ENCODE measurements at regions of chr20 and their contacts with region 1.

Region 1: DNA sequence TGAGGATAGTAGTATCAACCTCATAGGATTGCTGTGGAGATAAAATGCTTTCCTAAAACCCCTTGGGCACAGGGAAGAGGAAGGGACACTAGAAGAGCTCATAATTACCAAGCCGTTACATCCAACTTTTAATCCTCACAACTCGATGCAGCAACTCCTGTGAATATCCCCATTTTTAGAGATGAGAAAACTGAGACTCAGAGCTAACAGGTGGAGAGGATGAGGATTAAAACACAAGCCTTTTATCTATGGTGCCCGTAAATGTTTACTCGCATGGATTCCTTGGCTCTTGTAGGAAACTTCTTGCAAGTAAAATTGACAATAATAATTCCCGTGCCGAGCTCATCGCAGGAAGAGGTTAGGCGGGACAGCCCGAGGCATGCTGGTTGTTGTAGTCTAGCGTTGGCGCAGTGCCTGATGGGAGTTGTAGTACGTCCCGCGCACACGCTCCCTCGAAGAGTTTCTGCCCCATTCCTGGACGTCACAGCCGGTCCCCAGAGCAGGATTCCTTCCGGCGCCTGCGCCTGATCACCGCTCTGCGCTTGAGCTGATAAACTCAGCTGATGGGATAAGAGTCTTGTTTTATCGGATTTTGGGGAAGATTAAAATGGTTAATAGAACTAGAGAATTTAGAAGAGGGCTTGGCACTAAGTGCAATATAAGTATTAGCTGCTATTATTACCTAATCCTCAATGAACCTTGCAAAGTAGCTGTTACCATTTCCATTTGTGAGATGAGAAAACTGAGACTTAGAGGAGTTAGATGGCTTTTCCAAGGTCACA is 2.8 kb upstream of the UBE2V1 start:
- DNase-seq: peak; percentile 86
- H3K4me3 Mint-ChIP-seq: peak overlapping the region; percentile 100
- H3K27ac Mint-ChIP-seq: peak overlapping the region; percentile 88
- H3K4me1 Mint-ChIP-seq: peaks cover 45% of the 10 kb centered on the region
- H3K27me3 Mint-ChIP-seq: no peaks in the 10 kb centered on the region

Region 2: GRCh38 chr20:49186535-49187329 is 929.0 kb before region 1 on chr20:
- intact Hi-C with region 1: loop called (anchors 5 kb)
- DNase-seq: peak; percentile 66
- H3K4me3 Mint-ChIP-seq: peak overlapping the region; percentile 89
- H3K27ac Mint-ChIP-seq: peak overlapping the region; percentile 81
- H3K4me1 Mint-ChIP-seq: peaks cover 50% of the 10 kb centered on the region
- H3K27me3 Mint-ChIP-seq: peaks cover 4% of the 10 kb centered on the region

Region 3: DNA sequence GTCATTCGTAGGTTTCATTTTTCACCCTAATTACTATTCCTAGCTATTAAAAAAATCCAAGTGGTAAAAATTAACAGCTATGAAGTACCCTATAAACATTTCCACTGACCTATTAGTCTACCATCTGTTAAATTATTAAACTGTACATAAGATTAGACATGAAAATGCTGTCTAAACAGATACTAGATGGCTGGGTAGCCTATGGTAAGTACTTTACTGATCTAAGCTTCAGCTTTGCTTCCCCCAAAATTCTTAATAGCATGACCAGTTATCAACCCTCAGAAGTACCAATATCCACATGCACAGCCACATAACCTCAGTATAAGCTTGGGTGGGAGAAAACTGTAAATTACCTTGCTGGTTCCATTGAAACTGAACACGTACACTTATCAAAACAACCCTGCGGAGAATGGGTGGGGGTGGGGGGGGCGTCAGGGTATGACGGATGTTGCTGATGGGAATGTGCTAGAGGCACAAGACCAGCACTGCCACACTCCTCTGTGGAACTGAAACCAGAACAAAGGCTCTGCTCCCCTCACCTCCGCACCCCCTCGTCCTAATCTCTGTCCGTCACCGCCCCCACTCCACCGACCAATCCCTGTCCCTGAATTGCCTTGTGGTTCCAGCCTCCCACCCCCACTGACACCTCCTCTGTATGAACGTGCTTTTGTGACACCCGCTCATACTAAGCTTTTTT is 447.5 kb before region 1 on chr20:
- intact Hi-C with region 1: loop called (anchors 10 kb)
- DNase-seq: no peak
- H3K4me3 Mint-ChIP-seq: peak overlapping the region; percentile 5
- H3K27ac Mint-ChIP-seq: no peak overlapping the region
- H3K4me1 Mint-ChIP-seq: peaks cover 62% of the 10 kb centered on the region
- H3K27me3 Mint-ChIP-seq: peaks cover 3% of the 10 kb centered on the region

Region 4: DNA sequence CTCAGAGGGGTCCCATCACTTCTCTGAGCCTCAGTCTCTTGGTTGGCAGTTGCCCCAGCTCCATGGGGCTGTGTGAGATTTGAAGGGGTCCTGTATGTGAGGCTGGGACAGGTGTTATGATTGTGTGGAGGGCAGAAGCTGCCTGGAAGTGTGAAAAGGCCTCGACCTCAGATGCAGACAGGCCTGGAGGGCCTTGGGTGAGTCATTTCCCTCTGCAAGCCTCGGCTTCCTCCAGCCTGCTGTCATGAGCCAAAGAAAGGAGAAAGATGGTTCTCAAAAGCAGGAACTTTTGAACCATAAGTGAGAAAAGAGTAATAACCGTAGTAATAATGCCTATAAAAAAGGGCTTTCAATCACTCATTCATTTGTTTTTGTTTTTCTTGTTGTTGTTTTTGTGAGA is 95.5 kb before region 1 on chr20:
- intact Hi-C with region 1: no loop called
- DNase-seq: no peak
- H3K4me3 Mint-ChIP-seq: no peak overlapping the region
- H3K27ac Mint-ChIP-seq: no peak overlapping the region
- H3K4me1 Mint-ChIP-seq: peaks cover 17% of the 10 kb centered on the region
- H3K27me3 Mint-ChIP-seq: peaks cover 2% of the 10 kb centered on the region

Region 5: GRCh38 chr20:50146732-50147662 is 31.2 kb after region 1 on chr20:
- intact Hi-C with region 1: loop called (anchors 1 kb)
- DNase-seq: peak; percentile 79
- H3K4me3 Mint-ChIP-seq: peak overlapping the region; percentile 75
- H3K27ac Mint-ChIP-seq: peak overlapping the region; percentile 95
- H3K4me1 Mint-ChIP-seq: peaks cover 74% of the 10 kb centered on the region
- H3K27me3 Mint-ChIP-seq: no peaks in the 10 kb centered on the region

Region 6: GRCh38 chr20:50338479-50339391 is 223.0 kb after region 1 on chr20:
- intact Hi-C with region 1: loop called (anchors 1 kb)
- DNase-seq: peak; percentile 73
- H3K4me3 Mint-ChIP-seq: peak overlapping the region; percentile 74
- H3K27ac Mint-ChIP-seq: peak overlapping the region; percentile 89
- H3K4me1 Mint-ChIP-seq: peaks cover 75% of the 10 kb centered on the region
- H3K27me3 Mint-ChIP-seq: peaks cover 5% of the 10 kb centered on the region

Region 7: GRCh38 chr20:50561379-50562078 is 445.7 kb after region 1 on chr20:
- intact Hi-C with region 1: loop called (anchors 5 kb)
- DNase-seq: peak; percentile 32
- H3K4me3 Mint-ChIP-seq: peak overlapping the region; percentile 87
- H3K27ac Mint-ChIP-seq: peak overlapping the region; percentile 98
- H3K4me1 Mint-ChIP-seq: peaks cover 62% of the 10 kb centered on the region
- H3K27me3 Mint-ChIP-seq: no peaks in the 10 kb centered on the region